ENCODE measurements at regions of chr5 and their contacts with region 1.

Region 1: DNA sequence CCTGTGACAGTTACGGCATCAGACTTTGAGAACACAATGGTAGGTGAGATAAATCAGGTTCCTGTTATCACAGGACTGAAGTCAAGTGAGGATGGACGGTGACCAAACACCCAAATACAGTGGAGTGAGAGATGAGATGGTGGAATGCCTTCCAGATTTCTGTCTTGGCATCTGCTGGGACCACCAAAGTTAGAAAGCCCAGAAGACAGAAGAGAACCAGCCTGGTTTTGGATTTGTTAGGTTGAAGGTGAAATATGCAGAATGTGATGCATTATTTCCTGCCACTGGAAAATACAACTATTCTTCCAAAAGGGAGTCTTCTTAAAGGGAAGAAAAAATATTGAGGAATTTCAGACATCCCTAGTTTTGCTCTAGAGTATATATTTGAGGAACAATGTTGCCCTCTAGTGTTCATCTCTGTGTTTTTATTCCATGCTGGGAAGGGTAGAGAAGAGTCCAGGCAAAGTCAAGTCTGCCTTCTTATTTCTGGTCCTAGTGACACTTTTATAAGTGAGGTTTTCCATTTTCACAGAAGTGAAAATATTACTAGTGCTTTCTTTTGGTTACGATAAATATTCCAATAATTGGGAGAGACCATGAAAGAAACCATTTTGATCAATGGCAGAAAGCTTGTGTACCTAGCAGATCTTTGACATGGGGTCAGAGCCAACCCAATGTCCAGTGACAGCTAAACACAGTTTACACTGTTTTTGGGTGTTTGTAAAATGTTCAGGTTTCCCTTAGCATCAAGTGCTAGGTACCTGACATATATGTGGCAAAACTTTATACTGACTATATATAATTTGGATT is 142.3 kb upstream of the ANKH start:
- DNase-seq: peak in 1 of 2 donors; percentile 25
- ATAC-seq: peak; percentile 66 to 88 (median 85)
- H3K4me3 ChIP-seq: no peak overlapping the region
- H3K27ac ChIP-seq: no peak overlapping the region
- H3K4me1 ChIP-seq: peaks cover 3 to 20% (median 10%) of the 10 kb centered on the region in 9 donors
- H3K27me3 ChIP-seq: no peaks in the 10 kb centered on the region
- CTCF ChIP-seq: peak; percentile 40 to 82 (median 72)

Region 2: DNA sequence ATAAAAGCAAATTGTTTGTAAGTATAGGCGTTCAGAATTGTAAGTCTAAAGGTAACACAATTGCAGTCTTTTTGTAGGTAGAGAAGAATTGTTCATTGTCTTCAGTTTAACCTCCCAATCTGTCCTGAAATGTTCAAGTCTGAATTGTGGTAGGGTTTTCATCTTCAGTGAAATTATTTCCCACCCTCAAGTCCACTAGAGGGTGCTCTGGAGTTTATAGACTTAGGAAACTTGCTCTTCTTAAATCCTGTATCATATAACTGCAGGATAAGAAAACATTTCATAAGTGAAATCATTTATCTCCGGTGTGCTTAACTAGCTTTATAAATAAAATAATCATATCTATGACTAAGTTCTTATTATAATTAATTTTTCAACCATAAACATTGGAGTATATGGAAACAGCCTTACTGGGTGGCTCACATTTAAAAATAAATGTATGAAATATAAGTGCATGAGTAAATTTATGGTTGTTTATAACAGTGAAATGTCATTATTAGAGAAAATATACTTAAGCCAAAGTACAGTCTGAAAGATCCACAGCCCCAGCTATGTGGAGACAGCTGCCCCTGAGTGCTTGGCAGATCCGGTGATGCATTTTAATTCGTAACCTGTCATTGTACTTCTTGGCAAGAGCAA is 614.7 kb before region 1 on chr5:
- intact Hi-C with region 1: loop called in 3 of 10 experiments (anchors 10 kb)
- DNase-seq: no peak
- ATAC-seq: peak in 3 of 8 donors; percentile 34 to 58 (median 53)
- H3K4me3 ChIP-seq: no peak overlapping the region
- H3K27ac ChIP-seq: peak overlapping the region in 2 of 10 donors; percentile 40 to 48
- H3K4me1 ChIP-seq: peaks cover 0 to 30% (median 14%) of the 10 kb centered on the region in 9 donors
- H3K27me3 ChIP-seq: no peaks in the 10 kb centered on the region
- CTCF ChIP-seq: peak; percentile 48 to 84 (median 75)

Region 3: GRCh38 chr5:14405267-14405666 is 608.6 kb before region 1 on chr5:
- intact Hi-C with region 1: loop called in 2 of 10 experiments (anchors 10 kb)
- DNase-seq: no peak
- ATAC-seq: no peak
- H3K4me3 ChIP-seq: no peak overlapping the region
- H3K27ac ChIP-seq: no peak overlapping the region
- H3K4me1 ChIP-seq: peaks cover 2 to 69% (median 30%) of the 10 kb centered on the region in 9 donors
- H3K27me3 ChIP-seq: no peaks in the 10 kb centered on the region
- CTCF ChIP-seq: peak in 4 of 9 donors; percentile 8 to 43 (median 31)

Region 4: GRCh38 chr5:14685757-14686156 is 328.1 kb before region 1 on chr5:
- intact Hi-C with region 1: loop called in 7 of 10 experiments (anchors 5 to 10 kb)
- DNase-seq: peak in 1 of 2 donors; percentile 41
- ATAC-seq: peak; percentile 16 to 43 (median 38)
- H3K4me3 ChIP-seq: no peak overlapping the region
- H3K27ac ChIP-seq: peak overlapping the region in 7 of 10 donors; percentile 33 to 87 (median 70)
- H3K4me1 ChIP-seq: peaks cover 0 to 66% (median 20%) of the 10 kb centered on the region in 9 donors
- H3K27me3 ChIP-seq: no peaks in the 10 kb centered on the region
- CTCF ChIP-seq: peak in 8 of 9 donors; percentile 30 to 75 (median 68)

Region 5: GRCh38 chr5:14727428-14727865 is 286.4 kb before region 1 on chr5:
- intact Hi-C with region 1: loop called in 2 of 10 experiments (anchors 1 to 5 kb)
- DNase-seq: peak; percentile 80 to 84
- ATAC-seq: peak; percentile 49 to 86 (median 74)
- H3K4me3 ChIP-seq: no peak overlapping the region
- H3K27ac ChIP-seq: peak overlapping the region in 5 of 10 donors; percentile 12 to 64 (median 39)
- H3K4me1 ChIP-seq: peaks cover 6 to 57% (median 22%) of the 10 kb centered on the region in 9 donors
- H3K27me3 ChIP-seq: no peaks in the 10 kb centered on the region
- CTCF ChIP-seq: peak; percentile 91 to 98 (median 96)

Region 6: GRCh38 chr5:14739538-14739937 is 274.3 kb before region 1 on chr5:
- intact Hi-C with region 1: no loop called
- DNase-seq: no peak
- ATAC-seq: peak in 6 of 8 donors; percentile 46 to 68 (median 58)
- H3K4me3 ChIP-seq: no peak overlapping the region
- H3K27ac ChIP-seq: peak overlapping the region; percentile 4 to 68 (median 48)
- H3K4me1 ChIP-seq: peaks cover 10 to 72% (median 33%) of the 10 kb centered on the region in 9 donors
- H3K27me3 ChIP-seq: no peaks in the 10 kb centered on the region
- CTCF ChIP-seq: no peak

Measured in heart right ventricle (tissue), 16 donors.